Naive thymus-derived CD4-positive, alpha-beta T cell (primary cell): ENCODE measurements at regions of chr6 and their contacts with region 1.

Region 1: DNA sequence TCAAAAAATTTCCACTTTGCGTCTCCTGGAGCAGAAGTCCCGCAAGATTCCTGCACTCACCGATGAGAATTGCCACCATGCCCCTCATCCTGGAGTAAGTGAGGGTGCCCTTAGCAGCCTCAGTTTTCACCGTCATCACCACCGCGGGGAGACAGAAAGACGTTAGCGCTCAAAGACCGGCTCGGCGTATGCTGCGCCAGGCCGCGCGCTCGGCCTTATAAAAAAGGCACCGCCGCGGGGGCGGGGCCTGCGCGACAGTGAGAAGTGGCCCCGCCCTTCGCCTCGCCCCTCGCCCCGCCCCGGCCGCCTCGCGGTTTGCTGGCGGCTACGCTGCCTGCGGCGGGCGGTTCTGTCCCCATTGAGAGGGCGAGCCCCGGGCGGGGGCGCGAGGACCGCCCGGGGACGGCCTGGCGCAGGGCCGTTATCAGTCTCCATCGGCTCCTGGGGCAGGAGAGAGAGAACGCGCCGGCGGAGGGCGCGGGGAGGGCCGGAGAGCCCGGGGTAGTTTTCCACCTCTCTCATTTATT is 122.3 kb upstream of the SLC2A12 start:
- DNase-seq: peak; percentile 87 to 97 (median 93)
- ATAC-seq: peak; percentile 89
- H3K4me3 ChIP-seq: peak overlapping the region; percentile 71
- H3K4me3 Mint-ChIP-seq: peak overlapping the region; percentile 86 to 100 (median 98)
- H3K27ac ChIP-seq: peak overlapping the region; percentile 88
- H3K27ac Mint-ChIP-seq: peak overlapping the region; percentile 89 to 99 (median 97)
- H3K4me1 ChIP-seq: peaks cover 11 to 52% of the 10 kb centered on the region in 2 donors
- H3K4me1 Mint-ChIP-seq: peaks cover 48 to 78% (median 75%) of the 10 kb centered on the region in 7 donors
- H3K27me3 ChIP-seq: no peaks in the 10 kb centered on the region
- H3K27me3 Mint-ChIP-seq: no peaks in the 10 kb centered on the region

Region 2: DNA sequence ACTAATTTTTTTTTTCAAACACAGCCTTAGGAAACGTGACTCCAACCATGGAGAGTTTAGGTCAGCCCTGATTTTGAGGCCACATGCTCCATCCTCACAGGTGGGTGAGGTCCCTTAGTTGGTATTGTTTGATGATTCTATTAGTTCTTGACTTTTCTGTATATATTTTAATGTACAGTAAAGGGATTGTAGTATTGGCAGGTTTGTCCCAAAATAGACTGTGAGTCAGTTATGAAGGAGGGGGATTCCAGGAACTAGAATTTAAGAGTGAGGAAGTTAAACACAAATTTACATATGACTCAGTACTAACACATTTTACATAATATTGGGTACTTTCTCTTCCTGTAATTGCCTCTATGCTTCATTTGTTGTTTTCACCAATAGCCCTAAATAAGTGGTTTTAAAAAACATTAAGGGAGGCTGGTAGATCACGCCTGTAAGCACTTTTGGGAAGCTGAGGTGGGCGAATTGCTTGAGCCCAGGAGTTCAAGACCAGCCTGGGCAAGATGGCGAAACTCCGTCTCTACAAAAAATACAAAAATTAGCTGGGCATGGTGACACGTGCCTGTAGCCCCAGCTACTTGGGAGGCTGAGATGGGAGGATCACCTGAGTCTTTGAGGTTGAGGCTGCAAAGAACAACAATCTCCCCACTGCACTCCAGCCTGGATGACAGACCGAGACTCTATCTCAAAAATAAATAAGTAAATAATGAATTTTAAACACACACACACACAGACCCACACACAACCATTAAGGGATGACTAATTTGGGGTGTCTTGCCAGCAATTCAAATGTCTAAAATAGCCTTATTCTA is 61.4 kb after region 1 on chr6:
- CTCF ChIA-PET with region 1: no interaction called
- POLR2A ChIA-PET with region 1: interaction called, 5 read pairs
- intact Hi-C with region 1: loop called (anchors 1 to 2 kb)
- DNase-seq: no peak
- ATAC-seq: peak; percentile 69
- H3K4me3 ChIP-seq: no peak overlapping the region
- H3K4me3 Mint-ChIP-seq: peak overlapping the region in 2 of 10 donors; percentile 29 to 48
- H3K27ac ChIP-seq: no peak overlapping the region
- H3K27ac Mint-ChIP-seq: peak overlapping the region in 6 of 9 donors; percentile 6 to 86 (median 43)
- H3K4me1 ChIP-seq: peaks cover 18 to 22% of the 10 kb centered on the region in 2 donors
- H3K4me1 Mint-ChIP-seq: peaks cover 8 to 50% (median 43%) of the 10 kb centered on the region in 7 donors
- H3K27me3 ChIP-seq: no peaks in the 10 kb centered on the region
- H3K27me3 Mint-ChIP-seq: no peaks in the 10 kb centered on the region

Region 3: GRCh38 chr6:134373282-134373922 is 198.7 kb after region 1 on chr6:
- CTCF ChIA-PET with region 1: interaction called, 3 read pairs
- POLR2A ChIA-PET with region 1: no interaction called
- intact Hi-C with region 1: loop called in 1 of 2 experiments (anchors 2 kb)
- DNase-seq: no peak
- ATAC-seq: peak; percentile 71
- H3K4me3 ChIP-seq: no peak overlapping the region
- H3K4me3 Mint-ChIP-seq: peak overlapping the region in 5 of 10 donors; percentile 19 to 71 (median 38)
- H3K27ac ChIP-seq: no peak overlapping the region
- H3K27ac Mint-ChIP-seq: peak overlapping the region in 6 of 9 donors; percentile 20 to 92 (median 82)
- H3K4me1 ChIP-seq: peaks cover 0 to 14% of the 10 kb centered on the region in 2 donors
- H3K4me1 Mint-ChIP-seq: peaks cover 17 to 42% (median 37%) of the 10 kb centered on the region in 7 donors
- H3K27me3 ChIP-seq: no peaks in the 10 kb centered on the region
- H3K27me3 Mint-ChIP-seq: no peaks in the 10 kb centered on the region

Region 4: GRCh38 chr6:134640975-134641429 is 466.3 kb after region 1 on chr6:
- CTCF ChIA-PET with region 1: interaction called, 48 read pairs
- POLR2A ChIA-PET with region 1: interaction called, 15 read pairs
- intact Hi-C with region 1: loop called (anchors 1 kb)
- DNase-seq: peak; percentile 33 to 82 (median 74)
- ATAC-seq: peak; percentile 97
- H3K4me3 ChIP-seq: no peak overlapping the region
- H3K4me3 Mint-ChIP-seq: peak overlapping the region in 1 of 10 donors; percentile 12
- H3K27ac ChIP-seq: no peak overlapping the region
- H3K27ac Mint-ChIP-seq: peak overlapping the region in 4 of 9 donors; percentile 5 to 44 (median 29)
- H3K4me1 ChIP-seq: peaks cover 0 to 7% of the 10 kb centered on the region in 2 donors
- H3K4me1 Mint-ChIP-seq: peaks cover 1 to 34% (median 27%) of the 10 kb centered on the region in 7 donors
- H3K27me3 ChIP-seq: no peaks in the 10 kb centered on the region
- H3K27me3 Mint-ChIP-seq: peaks cover 0 to 3% (median 0%) of the 10 kb centered on the region in 5 donors

Region 5: DNA sequence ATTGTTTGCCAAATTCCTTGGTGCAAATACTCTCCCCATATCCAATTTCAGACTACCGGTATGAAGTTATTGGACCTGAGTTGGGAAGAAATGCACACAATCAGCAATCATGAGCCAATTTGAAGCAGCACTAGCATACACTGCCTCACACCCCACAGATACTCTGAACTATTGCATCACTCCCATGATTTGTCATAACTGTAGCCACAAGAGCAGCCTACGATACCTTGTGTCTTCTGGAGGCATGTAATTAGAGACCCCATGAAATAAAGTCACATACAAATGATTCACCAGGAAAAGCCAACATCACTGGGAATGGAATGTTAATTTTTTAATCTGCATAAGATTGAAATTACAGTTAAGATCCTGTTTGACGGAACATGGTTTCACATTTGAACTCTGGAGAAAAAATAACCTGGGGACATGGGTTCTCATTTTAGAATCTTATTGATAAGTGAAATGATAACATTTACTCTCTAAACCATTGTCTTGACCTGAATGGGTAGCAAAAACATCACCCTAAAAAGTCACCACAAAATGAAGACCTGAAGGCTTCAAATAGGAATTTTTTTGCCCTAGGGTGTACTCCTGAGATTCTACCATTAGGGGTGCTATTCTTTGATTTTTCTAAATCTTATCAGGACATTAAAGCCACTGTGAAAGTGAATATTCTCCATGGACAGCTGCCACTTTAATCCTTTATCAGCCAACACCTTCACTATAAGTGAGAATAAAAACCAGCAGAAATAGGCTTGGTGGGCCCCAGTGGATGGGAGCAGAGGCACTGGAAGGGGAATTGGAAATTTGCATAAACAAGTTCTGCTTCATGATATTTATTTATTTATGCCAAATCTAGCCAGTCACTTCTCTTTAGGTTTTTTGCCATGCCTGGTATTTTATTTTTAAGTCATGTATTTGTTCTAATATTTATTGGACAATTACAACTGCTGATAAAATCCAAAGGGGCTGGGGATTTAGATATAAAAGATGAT is 914.4 kb after region 1 on chr6:
- CTCF ChIA-PET with region 1: no interaction called
- POLR2A ChIA-PET with region 1: no interaction called
- intact Hi-C with region 1: loop called (anchors 1 kb)
- DNase-seq: peak in 4 of 9 donors; percentile 24 to 52 (median 36)
- ATAC-seq: peak; percentile 73
- H3K4me3 ChIP-seq: peak overlapping the region; percentile 50
- H3K4me3 Mint-ChIP-seq: peak overlapping the region; percentile 50 to 86 (median 66)
- H3K27ac ChIP-seq: peak overlapping the region; percentile 69
- H3K27ac Mint-ChIP-seq: peak overlapping the region; percentile 72 to 98 (median 95)
- H3K4me1 ChIP-seq: peaks cover 29 to 63% of the 10 kb centered on the region in 2 donors
- H3K4me1 Mint-ChIP-seq: peaks cover 43 to 98% (median 94%) of the 10 kb centered on the region in 7 donors
- H3K27me3 ChIP-seq: no peaks in the 10 kb centered on the region
- H3K27me3 Mint-ChIP-seq: no peaks in the 10 kb centered on the region

Region 6: DNA sequence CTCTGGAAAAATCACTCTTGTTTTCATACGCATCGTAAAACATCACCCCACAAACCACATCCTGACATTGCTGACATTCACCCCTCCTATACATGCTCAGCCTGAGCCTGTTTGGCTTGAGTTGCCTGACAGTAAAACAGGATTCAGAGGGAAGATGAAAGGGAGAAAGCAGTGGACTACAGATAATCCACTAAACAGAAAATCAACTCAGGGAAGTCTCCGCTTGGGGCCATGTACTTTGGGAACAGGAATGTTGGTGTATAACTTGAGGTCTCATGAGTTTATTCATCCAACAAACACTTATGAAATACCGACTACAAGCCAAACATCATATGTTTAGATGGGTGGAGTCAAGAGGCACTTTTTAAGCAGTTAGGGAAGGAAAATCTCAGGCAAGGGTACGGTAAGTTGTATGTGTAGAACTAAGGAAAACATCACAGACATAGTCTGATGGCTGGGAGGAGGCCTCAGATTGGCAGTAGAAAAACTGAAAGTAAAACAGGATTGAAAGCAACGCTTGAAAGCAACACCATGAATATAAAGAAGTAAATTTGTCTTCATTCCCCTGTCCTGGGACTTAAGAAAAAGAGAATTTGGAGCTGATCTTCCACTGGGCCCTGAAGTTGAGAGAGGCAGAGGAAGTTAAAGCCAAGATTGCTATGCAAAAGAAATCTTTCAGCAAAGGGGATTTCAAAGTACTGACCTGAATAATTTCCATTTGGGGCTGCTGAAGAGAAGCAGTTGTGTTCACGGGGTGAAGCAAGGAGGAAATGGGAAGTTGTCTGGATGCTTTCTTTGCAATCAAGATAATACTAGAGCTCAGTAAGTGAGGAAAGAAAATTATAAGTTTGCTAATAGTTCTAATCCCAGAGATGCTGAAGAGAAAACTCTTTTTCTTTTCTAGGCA is 1705.6 kb after region 1 on chr6:
- CTCF ChIA-PET with region 1: no interaction called
- POLR2A ChIA-PET with region 1: no interaction called
- intact Hi-C with region 1: loop called in 1 of 2 experiments (anchors 5 kb)
- DNase-seq: peak in 8 of 9 donors; percentile 52 to 86 (median 79)
- ATAC-seq: peak; percentile 95
- H3K4me3 ChIP-seq: peak overlapping the region; percentile 40
- H3K4me3 Mint-ChIP-seq: peak overlapping the region; percentile 81 to 94 (median 86)
- H3K27ac ChIP-seq: peak overlapping the region; percentile 90
- H3K27ac Mint-ChIP-seq: peak overlapping the region; percentile 94 to 99 (median 98)
- H3K4me1 ChIP-seq: peaks cover 16 to 37% of the 10 kb centered on the region in 2 donors
- H3K4me1 Mint-ChIP-seq: peaks cover 31 to 90% (median 79%) of the 10 kb centered on the region in 7 donors
- H3K27me3 ChIP-seq: no peaks in the 10 kb centered on the region
- H3K27me3 Mint-ChIP-seq: no peaks in the 10 kb centered on the region